ENCODE measurements at regions of chr3 and their contacts with region 1.

Region 1: GRCh38 chr3:87350364-87351199 is 74.2 kb upstream of the POU1F1 start:
- DNase-seq: peak; percentile 22
- H3K4me3 Mint-ChIP-seq: no peak overlapping the region
- H3K27ac Mint-ChIP-seq: no peak overlapping the region
- H3K4me1 Mint-ChIP-seq: peaks cover 2% of the 10 kb centered on the region
- H3K27me3 Mint-ChIP-seq: peaks cover 3% of the 10 kb centered on the region

Region 2: DNA sequence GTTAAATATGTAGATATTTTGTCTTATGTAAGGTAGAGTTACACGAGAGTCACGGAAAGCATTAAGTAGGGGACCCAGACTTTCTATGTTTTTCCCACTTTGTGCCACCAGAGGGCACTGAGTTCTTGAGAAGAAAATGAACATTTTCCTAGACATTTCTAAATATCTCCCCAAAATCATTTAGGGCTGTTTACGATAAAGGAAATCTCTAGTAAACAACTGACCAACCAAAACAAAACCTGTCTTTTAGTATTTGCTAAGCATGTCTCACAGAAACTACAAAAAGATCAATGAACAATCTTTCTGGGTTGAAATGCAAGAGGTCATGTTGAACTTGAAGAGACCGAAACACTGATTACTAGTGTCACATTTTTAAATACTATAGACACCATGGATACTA is 90.3 kb before region 1 on chr3:
- CTCF ChIA-PET with region 1: interaction called, 5 read pairs
- intact Hi-C with region 1: loop called (anchors 2 kb)
- DNase-seq: peak; percentile 66
- H3K4me3 Mint-ChIP-seq: no peak overlapping the region
- H3K27ac Mint-ChIP-seq: no peak overlapping the region
- H3K4me1 Mint-ChIP-seq: no peaks in the 10 kb centered on the region
- H3K27me3 Mint-ChIP-seq: no peaks in the 10 kb centered on the region

Region 3: DNA sequence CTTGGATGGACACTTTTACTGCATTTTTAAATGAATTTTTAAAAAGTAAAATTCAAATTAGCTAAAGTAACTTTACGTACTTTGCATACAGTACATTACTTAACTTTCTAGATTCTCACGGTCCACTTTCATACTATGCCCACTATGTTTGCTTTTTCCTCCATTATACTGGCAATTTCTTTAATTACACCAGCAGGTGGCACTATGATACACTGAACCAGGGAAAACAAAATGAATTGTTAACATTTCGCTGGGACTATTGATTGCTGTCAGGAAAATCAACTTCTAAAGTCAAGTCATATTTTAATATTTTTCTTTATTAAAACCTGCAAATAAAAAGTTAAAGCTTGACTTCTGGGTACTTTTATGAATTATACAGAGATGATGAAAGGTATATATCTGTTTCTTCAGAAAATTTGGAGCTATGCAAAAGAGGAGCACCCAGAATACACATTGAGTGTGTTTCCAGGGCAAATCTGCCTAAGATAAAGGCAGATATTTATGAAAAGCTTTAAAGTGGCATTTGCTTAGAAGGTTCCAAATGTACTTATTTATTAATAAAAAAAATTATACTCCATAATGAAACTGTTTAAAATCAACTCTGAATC is 52.4 kb before region 1 on chr3:
- CTCF ChIA-PET with region 1: interaction called, 10 read pairs
- intact Hi-C with region 1: loop called (anchors 1 kb)
- DNase-seq: no peak
- H3K4me3 Mint-ChIP-seq: no peak overlapping the region
- H3K27ac Mint-ChIP-seq: no peak overlapping the region
- H3K4me1 Mint-ChIP-seq: no peaks in the 10 kb centered on the region
- H3K27me3 Mint-ChIP-seq: no peaks in the 10 kb centered on the region

Region 4: DNA sequence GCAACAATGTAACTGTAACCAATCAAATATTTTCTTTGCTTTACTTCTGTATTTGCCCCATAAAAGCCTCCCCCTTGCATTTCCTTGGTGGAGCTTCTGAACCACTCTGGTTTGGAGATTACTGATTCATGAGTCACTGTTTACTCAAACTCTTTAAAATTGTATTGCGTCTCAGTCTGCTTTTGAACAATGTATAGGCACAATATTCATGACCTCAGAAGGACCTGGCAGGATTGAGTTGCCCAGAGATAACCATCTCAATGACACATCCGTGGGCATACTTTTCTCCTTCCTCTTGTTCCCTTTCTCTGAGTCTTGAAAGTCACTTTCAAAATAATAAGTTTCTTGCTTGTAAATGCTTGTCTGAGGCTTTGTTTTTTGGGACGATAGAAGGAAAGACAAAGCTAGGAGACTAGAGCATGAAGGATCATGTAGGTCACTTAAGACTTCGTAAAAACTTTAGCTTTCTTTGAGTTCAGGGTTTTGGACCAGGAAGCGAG is 17.1 kb before region 1 on chr3:
- CTCF ChIA-PET with region 1: interaction called, 14 read pairs
- intact Hi-C with region 1: no loop called
- DNase-seq: peak; percentile 49
- H3K4me3 Mint-ChIP-seq: no peak overlapping the region
- H3K27ac Mint-ChIP-seq: peak overlapping the region; percentile 82
- H3K4me1 Mint-ChIP-seq: peaks cover 17% of the 10 kb centered on the region
- H3K27me3 Mint-ChIP-seq: peaks cover 5% of the 10 kb centered on the region

Region 5: DNA sequence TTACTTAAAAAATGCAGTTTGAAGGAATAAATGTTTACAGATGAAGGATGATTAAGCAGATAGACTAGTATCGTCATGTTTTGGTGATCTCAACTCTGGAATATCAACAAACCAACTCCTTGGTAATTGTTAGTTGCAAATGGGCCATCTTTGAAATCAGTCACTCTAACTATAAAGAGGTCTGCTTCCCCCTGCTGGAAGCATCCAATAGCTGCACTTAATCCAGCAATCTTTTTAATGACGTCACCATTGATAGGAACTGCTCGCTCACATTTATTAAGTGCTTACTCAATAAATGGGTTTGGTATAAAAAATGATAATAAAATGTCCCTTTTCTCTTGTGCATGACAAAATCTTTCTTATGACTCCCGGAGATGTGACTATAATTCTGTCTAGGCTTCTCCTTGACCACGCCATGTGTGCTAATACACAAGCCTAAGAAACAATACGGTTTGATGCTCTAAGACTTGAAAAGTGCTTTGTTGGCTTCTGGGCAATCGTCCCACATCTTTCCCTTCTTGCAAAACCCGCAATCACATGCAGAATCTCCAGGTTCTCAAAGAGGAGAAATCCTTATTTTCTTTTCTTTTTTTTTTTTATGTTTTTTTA is 153.4 kb after region 1 on chr3:
- CTCF ChIA-PET with region 1: interaction called, 12 read pairs
- intact Hi-C with region 1: loop called (anchors 1 kb)
- DNase-seq: peak; percentile 22
- H3K4me3 Mint-ChIP-seq: no peak overlapping the region
- H3K27ac Mint-ChIP-seq: no peak overlapping the region
- H3K4me1 Mint-ChIP-seq: no peaks in the 10 kb centered on the region
- H3K27me3 Mint-ChIP-seq: no peaks in the 10 kb centered on the region

Region 6: DNA sequence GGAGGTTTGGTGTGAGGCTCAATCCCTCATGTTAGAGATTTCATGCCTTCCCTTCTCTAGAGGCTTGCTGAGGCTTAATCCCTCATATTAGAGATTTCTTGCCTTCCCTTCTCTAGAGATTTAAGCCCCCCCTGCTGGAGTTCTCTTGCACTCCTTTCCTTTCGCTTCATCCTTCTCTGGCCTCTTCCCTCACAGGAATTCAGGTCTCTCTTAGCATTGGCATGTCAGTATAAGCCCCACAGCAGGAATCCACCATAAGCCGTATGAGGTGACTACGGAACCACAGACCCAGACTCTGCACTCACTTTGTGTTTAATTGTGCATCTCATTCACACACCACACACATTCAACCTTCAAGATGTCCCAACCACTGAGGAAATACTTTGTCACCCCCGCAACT is 264.4 kb after region 1 on chr3:
- CTCF ChIA-PET with region 1: no interaction called
- intact Hi-C with region 1: loop called (anchors 10 kb)
- DNase-seq: no peak
- H3K4me3 Mint-ChIP-seq: no peak overlapping the region
- H3K27ac Mint-ChIP-seq: no peak overlapping the region
- H3K4me1 Mint-ChIP-seq: no peaks in the 10 kb centered on the region
- H3K27me3 Mint-ChIP-seq: no peaks in the 10 kb centered on the region

Region 7: DNA sequence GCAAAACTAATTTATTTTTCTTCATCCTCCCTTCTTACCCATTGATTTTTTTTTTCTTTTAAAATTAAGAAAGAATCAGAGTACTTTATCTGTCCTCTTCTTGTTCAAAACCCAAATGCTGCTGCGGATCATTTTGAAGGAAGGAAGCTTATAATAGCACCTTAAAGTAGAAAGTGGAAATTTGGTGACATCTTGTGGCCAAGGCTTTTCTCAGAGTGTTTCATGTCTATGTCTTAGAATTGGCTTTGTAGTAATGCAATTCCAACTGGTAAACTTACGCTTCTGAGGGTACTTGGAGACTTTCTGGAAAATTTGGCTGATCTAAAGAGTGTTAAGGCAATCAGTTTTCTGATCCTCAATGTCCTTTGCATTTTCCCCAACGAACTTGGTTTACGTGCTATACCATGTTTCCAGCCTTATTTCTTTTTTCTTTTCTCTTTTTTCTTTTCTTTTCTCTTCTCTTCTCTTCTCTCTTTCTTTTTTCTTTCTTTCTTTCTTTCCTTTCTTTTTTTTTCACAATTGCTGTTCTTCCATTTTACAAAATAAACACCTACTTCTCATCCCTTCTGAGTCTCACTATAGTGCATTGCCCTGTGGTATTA is 829.9 kb after region 1 on chr3:
- CTCF ChIA-PET with region 1: interaction called, 3 read pairs
- intact Hi-C with region 1: loop called (anchors 1 kb)
- DNase-seq: peak; percentile 62
- H3K4me3 Mint-ChIP-seq: no peak overlapping the region
- H3K27ac Mint-ChIP-seq: no peak overlapping the region
- H3K4me1 Mint-ChIP-seq: no peaks in the 10 kb centered on the region
- H3K27me3 Mint-ChIP-seq: no peaks in the 10 kb centered on the region